AG04449 (cell line): ENCODE measurements at regions of chr5 and their contacts with region 1.

Region 1: DNA sequence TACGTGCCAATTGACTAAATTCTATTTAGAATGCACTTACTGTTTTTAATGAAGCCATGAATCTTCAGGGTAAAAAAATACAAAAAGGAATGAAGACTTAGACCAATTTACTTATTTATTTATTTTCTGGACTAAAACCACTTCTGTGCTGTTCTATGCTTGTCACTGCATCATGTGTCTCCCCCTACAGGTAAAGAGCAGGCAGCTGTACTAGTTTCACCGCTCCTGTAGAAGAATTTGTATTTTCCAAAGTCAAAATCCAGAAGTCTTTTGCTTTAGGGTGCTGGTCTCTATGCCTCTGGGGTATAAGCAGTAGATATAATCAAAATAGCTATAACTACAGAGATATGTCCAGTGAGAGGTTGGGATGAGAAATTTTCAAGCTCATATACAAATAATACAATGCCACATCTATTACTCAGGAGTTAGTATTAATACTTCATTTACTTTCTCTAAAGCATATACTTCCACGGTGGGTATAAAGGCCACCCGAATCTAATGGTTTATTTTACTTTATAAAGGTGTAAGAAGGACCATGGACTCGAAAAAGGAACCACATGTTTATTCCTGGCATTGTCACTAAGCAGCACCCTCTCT is 591.5 kb downstream of the RAB3C start:
- DNase-seq: peak; percentile 59
- H3K4me3 ChIP-seq: no peak overlapping the region
- CTCF ChIP-seq: peak; percentile 75

Region 2: DNA sequence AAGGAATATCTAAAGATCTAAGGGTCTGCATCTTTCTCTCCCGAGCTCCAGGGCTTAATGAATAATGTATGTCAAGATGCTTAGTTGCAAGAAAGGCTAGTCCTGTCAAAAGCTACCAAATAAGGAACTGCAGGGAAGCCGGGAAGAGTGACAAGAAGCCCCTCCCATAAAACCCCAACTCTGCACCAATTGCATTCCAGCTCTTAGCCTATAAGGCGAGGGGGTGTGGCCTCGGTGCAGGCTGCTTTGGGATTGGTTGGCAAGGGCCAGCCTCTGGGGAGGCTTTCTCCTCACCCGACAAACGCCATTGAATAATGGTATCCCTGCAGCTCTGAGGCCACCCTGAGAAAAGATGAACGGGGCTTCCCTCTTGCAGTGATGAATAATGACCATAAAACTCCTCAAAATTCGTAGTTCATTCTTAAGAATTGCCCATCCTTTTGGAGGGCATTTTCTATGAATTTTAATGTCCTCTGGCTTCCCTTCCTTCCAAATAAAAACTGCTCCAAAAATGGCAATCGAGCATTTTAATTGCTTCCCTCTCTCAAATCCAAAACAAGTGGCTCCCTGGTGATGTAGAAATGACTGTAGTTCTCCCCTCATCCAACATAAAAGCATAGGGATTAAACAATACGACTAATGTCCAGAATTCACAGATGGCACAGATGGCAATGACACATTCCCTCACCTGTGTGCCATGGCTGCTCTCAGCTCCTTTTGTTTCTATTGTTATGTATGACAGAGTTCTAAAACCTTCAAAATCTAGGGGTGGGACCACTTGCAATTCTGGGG is 174.3 kb before region 1 on chr5:
- CTCF ChIA-PET with region 1: interaction called, 16 read pairs
- POLR2A ChIA-PET with region 1: no interaction called
- DNase-seq: no peak
- H3K4me3 ChIP-seq: no peak overlapping the region
- CTCF ChIP-seq: no peak

Region 3: GRCh38 chr5:59039296-59040023 is 134.9 kb before region 1 on chr5:
- CTCF ChIA-PET with region 1: interaction called, 117 read pairs
- POLR2A ChIA-PET with region 1: no interaction called
- DNase-seq: no peak
- H3K4me3 ChIP-seq: peak overlapping the region; percentile 81
- CTCF ChIP-seq: no peak

Region 4: GRCh38 chr5:59158165-59158564 is 16.2 kb before region 1 on chr5:
- CTCF ChIA-PET with region 1: interaction called, 19 read pairs
- POLR2A ChIA-PET with region 1: no interaction called
- DNase-seq: no peak
- H3K4me3 ChIP-seq: no peak overlapping the region
- CTCF ChIP-seq: no peak

Region 5: DNA sequence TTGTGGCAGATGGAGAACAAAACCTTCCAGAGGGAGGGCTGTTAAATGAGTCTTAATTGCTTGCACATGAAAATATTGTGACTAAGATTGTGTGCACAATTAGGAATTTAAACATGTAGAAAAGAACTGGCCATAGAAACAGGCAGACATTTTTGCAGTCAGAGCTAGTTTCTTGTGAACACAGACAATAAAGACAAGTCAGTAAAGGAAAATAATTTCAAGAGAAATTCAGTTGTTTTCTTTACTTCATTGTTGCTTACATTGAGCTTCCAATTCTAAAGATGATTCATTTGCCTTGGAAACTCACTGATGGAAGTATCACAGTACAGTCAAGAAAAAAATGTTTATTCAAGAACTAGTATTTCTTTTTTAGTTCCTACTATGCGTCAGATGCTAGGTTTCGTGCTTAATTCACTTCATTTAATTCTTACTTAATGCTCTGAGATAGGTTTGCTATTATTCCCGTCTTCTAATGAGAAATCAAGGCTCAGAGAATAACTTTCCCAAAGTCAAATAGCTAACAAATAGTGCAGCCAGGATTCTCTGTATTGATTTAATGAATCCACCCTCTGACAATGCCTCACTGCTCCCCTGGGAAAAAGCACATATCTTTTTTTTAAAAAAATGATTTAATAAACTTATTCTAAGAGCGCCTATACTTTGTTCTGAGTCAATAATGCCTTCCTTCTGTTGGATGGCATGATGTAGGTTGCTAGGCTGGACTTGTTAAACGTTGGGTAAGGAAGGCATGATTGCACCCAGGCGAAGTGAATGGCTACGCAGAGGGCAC is 10.1 kb before region 1 on chr5:
- CTCF ChIA-PET with region 1: interaction called, 19 read pairs
- POLR2A ChIA-PET with region 1: no interaction called
- DNase-seq: peak; percentile 16
- H3K4me3 ChIP-seq: no peak overlapping the region
- CTCF ChIP-seq: no peak